BJ (cell line): ENCODE measurements at regions of chr17 and their contacts with region 1.

Region 1: GRCh38 chr17:41665566-41666236 is 23.0 kb upstream of the EIF1 start:
- DNase-seq: no peak
- H3K4me3 ChIP-seq: peak overlapping the region; percentile 38
- H3K27me3 ChIP-seq: no peaks in the 10 kb centered on the region
- CTCF ChIP-seq: peak; percentile 80

Region 2: DNA sequence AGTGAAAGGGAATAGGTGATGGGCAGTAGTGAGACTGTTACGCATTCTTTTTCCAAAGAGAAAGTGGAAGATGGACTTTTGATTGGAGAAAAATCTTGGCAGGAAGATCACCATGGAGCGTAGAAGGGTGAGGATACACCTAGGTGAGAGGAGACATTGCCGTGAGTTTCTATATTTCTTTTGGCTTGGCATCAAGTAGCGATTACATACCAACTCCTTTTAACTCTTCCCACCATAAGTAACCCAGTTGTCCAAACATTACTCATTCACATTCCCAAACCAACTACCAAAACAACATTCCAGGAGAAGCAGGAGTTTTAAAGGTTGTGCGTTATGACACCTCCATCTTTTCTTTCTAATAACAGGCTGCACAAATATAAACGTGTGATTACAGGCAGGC is 855.2 kb before region 1 on chr17:
- CTCF ChIA-PET with region 1: interaction called, 103 read pairs
- POLR2A ChIA-PET with region 1: interaction called, 6 read pairs
- DNase-seq: no peak
- H3K4me3 ChIP-seq: no peak overlapping the region
- H3K27me3 ChIP-seq: no peaks in the 10 kb centered on the region
- CTCF ChIP-seq: no peak

Region 3: DNA sequence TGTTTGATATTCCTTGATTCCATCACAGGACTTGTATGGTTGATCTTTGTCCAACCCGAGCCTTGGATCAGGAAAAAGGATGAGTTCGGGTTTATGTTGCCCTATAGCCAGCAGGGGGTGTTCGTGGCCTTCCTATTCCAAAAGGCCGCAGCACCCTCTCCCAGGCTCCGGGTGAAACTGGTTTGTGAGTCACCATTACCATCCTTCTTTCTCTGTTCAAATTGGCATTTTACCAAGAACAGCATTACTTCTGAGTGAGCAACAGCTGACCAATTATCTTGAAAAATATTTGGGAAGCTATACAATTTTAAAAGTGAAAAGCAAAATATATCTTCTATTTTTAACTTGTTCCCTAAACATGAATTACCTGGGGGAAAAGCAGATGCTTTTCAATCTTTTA is 756.4 kb before region 1 on chr17:
- CTCF ChIA-PET with region 1: interaction called, 14 read pairs
- POLR2A ChIA-PET with region 1: no interaction called
- DNase-seq: peak; percentile 83
- H3K4me3 ChIP-seq: no peak overlapping the region
- H3K27me3 ChIP-seq: no peaks in the 10 kb centered on the region
- CTCF ChIP-seq: peak; percentile 75

Region 4: DNA sequence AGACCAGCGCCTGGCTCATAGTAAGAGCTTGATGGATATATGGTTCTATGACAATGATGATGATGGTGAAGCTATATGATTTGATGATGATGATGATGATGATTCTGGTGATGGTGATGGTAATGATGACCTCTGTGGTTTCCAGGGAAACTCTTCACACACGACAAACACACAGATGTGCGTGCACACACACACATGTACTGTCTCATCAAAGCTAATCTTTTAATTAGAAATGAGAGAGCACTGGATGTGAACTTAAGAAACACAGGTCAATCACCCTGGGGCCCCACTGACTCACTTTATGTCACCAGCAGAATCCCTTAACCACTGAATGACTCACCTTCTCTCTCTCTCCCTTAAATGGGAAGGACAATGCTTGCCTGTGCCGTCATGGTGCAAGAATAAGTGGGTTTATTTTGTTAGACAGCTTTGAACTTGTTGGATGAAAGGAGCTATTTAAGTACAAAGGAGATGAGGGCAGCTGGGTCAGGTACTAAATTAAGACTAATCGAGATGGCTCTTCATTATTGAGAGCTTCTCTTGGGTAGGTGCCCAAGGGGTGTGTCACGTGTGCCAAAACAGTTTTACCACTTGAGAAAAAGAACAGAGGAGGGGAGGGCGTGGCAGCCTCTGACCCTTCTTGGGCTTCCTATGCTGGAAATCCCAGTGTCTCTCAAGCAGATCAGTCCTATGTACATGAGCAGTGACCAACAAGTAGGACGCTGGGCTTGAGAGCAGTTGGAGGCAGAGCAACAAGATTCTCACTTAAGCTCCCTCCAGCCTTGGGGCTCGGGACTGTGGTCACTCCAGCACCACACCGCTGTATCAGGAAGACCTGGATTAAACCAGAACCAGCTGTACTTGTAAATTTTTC is 261.7 kb before region 1 on chr17:
- CTCF ChIA-PET with region 1: interaction called, 19 read pairs
- POLR2A ChIA-PET with region 1: no interaction called
- DNase-seq: peak; percentile 94
- H3K4me3 ChIP-seq: no peak overlapping the region
- H3K27me3 ChIP-seq: no peaks in the 10 kb centered on the region
- CTCF ChIP-seq: no peak

Region 5: GRCh38 chr17:41678907-41679739 is 13.4 kb after region 1 on chr17:
- CTCF ChIA-PET with region 1: interaction called, 39 read pairs
- POLR2A ChIA-PET with region 1: no interaction called
- DNase-seq: no peak
- H3K4me3 ChIP-seq: no peak overlapping the region
- H3K27me3 ChIP-seq: peaks cover 1% of the 10 kb centered on the region; the same call in 1 of the 2 replicates
- CTCF ChIP-seq: peak; percentile 19; the same call in 1 of the 2 replicates